WTC11 (cell line): ENCODE measurements at regions of chr5 and their contacts with region 1.

Region 1: GRCh38 chr5:150544611-150545219 is 36.8 kb downstream of the NDST1 start:
- DNase-seq: peak; percentile 94
- ATAC-seq: peak; percentile 99
- H3K4me3 Mint-ChIP-seq: no peak overlapping the region
- H3K27ac Mint-ChIP-seq: no peak overlapping the region
- H3K4me1 Mint-ChIP-seq: no peaks in the 10 kb centered on the region
- H3K27me3 Mint-ChIP-seq: no peaks in the 10 kb centered on the region
- CTCF ChIP-seq: peak; percentile 90

Region 2: GRCh38 chr5:150458819-150459557 is 85.7 kb before region 1 on chr5:
- CTCF ChIA-PET with region 1: interaction called, 75 read pairs
- POLR2A ChIA-PET with region 1: no interaction called
- DNase-seq: peak; percentile 91
- ATAC-seq: peak; percentile 67
- H3K4me3 Mint-ChIP-seq: peak overlapping the region; percentile 15; the same call in 1 of the 2 replicates
- H3K27ac Mint-ChIP-seq: no peak overlapping the region
- H3K4me1 Mint-ChIP-seq: peaks cover 43% of the 10 kb centered on the region
- H3K27me3 Mint-ChIP-seq: no peaks in the 10 kb centered on the region
- CTCF ChIP-seq: peak; percentile 87

Region 3: DNA sequence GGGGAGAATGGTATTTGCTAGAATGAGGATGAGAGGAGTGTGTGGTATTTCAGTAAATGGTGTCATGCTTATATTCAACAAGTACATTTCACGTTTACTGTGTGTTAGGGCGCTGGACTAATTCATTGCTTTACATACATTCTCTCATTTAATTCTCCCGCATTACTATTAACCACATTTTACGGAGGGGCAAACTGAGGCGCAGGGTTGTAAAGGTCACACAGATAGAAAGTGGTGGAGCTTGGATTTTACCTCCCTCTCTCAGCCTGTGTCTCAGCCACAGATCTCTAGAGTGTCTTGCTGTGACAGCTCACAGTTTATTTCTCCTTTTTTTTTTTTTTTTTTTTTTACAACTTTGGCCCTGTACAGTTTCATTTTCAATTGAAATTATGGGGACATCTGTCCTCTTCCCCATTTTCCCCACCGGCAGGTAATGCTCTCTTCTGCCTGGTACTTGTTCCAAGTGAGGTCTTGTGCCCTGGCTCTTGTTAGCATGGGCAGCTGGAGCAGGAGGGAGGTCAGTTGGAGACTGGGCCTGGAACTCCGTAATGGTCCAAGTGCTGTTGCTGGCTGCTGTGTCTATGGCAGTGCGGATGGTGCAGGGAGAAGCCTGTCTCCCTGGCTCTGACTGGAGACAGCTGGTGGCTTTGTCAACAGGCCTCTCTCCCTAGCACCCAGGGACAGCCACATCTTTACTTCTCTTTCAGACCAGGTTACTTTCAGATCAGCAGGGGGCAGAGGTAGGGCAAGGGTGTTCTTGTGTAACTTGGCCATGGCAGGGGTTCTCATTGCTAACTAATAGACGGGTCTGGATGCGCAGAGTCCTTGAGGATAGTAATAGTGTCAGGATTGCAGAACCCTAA is 57.3 kb before region 1 on chr5:
- CTCF ChIA-PET with region 1: interaction called, 20 read pairs
- POLR2A ChIA-PET with region 1: no interaction called
- DNase-seq: no peak
- ATAC-seq: no peak
- H3K4me3 Mint-ChIP-seq: peak overlapping the region; percentile 70
- H3K27ac Mint-ChIP-seq: peak overlapping the region; percentile 55
- H3K4me1 Mint-ChIP-seq: peaks cover 70% of the 10 kb centered on the region
- H3K27me3 Mint-ChIP-seq: no peaks in the 10 kb centered on the region
- CTCF ChIP-seq: no peak

Region 4: GRCh38 chr5:150511578-150512367 is 32.9 kb before region 1 on chr5:
- CTCF ChIA-PET with region 1: interaction called, 12 read pairs
- POLR2A ChIA-PET with region 1: interaction called, 3 read pairs
- DNase-seq: peak; percentile 64
- ATAC-seq: peak; percentile 43
- H3K4me3 Mint-ChIP-seq: peak overlapping the region; percentile 29; the same call in 1 of the 2 replicates
- H3K27ac Mint-ChIP-seq: peak overlapping the region; percentile 79
- H3K4me1 Mint-ChIP-seq: peaks cover 61% of the 10 kb centered on the region
- H3K27me3 Mint-ChIP-seq: no peaks in the 10 kb centered on the region
- CTCF ChIP-seq: no peak

Region 5: DNA sequence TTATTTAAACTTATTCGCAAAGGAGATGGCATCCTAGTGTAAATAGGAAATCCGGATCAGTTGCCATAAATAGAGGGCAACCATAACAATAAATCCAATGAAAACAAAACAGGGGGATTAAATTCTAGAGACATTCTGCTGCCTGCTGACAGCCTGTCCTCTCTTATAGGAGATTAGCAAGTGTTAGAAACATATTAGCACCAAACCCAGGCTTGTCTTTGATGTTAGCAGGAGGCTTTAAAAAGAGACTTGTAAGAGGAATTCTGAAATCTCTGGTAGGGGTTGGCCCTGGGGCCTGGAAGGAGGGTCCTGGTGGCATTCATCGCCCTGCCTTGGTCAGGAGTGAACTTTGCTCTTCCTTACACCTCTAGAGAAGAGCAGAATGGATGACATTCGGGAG is 15.2 kb before region 1 on chr5:
- CTCF ChIA-PET with region 1: interaction called, 24 read pairs
- POLR2A ChIA-PET with region 1: no interaction called
- DNase-seq: no peak
- ATAC-seq: no peak
- H3K4me3 Mint-ChIP-seq: no peak overlapping the region
- H3K27ac Mint-ChIP-seq: no peak overlapping the region; the same call in 1 of the 2 replicates
- H3K4me1 Mint-ChIP-seq: peaks cover 34% of the 10 kb centered on the region
- H3K27me3 Mint-ChIP-seq: no peaks in the 10 kb centered on the region
- CTCF ChIP-seq: no peak

Region 6: GRCh38 chr5:150700594-150701293 is 156.0 kb after region 1 on chr5 and contains the start of gene RBM22:
- CTCF ChIA-PET with region 1: interaction called, 10 read pairs
- POLR2A ChIA-PET with region 1: no interaction called
- DNase-seq: peak; percentile 92
- ATAC-seq: peak; percentile 95
- H3K4me3 Mint-ChIP-seq: no peak within 1 kb of the TSS
- H3K27ac Mint-ChIP-seq: no peak within 1 kb of the TSS
- H3K4me1 Mint-ChIP-seq: peaks cover 2% of the 10 kb centered on the region; the same call in 1 of the 2 replicates
- H3K27me3 Mint-ChIP-seq: no peaks in the 10 kb centered on the region; the same call in 1 of the 2 replicates
- CTCF ChIP-seq: peak; percentile 44; the same call in 1 of the 2 replicates
- total RNA-seq, gene RBM22: 28.7 to 34.0 TPM (median 31.6 TPM) in 3 replicates